Cardiac septum (tissue), 1 donor: ENCODE measurements at regions of chr3 and their contacts with region 1.

Region 1: DNA sequence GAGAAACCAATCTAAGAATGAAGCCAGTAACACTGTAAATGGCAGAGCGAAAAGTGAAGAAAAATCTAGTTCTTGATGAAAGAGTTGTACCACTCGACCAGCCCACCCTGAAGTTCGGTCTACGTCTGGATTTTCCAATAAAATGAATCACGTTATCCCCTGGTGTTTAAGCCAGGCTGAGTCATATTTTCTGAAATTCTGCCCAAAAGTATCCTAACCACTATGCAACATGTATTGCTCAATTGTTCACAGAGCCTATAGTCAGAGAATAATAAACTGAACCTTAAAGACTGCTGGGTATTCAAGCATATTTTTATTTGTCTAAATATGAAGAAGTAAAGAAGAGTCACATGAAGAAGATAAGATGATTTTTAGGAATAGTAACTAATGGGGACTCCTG is 245.7 kb downstream of the FGF12 start:
- DNase-seq: no peak

Region 2: DNA sequence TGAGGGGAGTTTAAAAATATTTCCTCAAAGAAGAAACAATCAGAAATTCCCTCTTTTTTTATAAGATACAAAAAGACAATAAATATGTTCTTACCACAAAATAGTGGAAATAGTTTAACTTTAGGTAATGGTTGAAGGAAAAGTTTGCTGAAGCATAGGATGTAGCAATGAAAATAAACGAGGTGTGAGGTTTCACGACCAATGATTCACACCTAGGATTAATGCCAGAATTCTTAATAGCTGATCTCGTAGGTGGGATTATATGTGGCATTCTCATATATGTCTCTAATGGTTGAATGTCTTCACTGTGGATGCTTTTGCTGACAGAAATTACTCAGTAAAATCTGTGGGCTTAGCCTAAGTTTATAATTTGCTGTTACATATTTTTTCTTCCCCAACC is 222.0 kb before region 1 on chr3:
- intact Hi-C with region 1: no loop called
- DNase-seq: no peak

Region 3: GRCh38 chr3:192514081-192514753 is 32.6 kb after region 1 on chr3:
- intact Hi-C with region 1: loop called (anchors 2 kb)
- DNase-seq: no peak

Region 4: DNA sequence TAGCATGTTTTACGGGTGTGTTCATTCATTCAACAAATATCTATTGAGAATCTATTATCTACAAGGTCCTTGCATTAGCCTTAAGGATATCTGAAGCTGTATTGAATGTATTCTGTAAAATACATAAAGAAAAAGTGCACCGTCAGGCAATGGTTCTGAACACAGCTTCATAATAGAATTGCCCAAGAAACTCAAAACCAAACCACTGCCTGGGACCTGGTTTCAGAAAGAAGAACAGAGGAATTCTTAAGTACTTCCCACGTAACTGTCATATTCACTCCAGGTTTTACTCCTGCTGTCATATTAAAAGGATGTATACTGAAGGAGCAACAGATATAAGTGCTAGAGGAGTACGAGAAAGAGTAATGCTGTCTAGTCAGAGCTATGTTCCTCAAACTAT is 129.8 kb after region 1 on chr3:
- intact Hi-C with region 1: no loop called
- DNase-seq: no peak